Right cardiac atrium (tissue), 5 donors: ENCODE measurements at regions of chr1 and their contacts with region 1.

Region 1: DNA sequence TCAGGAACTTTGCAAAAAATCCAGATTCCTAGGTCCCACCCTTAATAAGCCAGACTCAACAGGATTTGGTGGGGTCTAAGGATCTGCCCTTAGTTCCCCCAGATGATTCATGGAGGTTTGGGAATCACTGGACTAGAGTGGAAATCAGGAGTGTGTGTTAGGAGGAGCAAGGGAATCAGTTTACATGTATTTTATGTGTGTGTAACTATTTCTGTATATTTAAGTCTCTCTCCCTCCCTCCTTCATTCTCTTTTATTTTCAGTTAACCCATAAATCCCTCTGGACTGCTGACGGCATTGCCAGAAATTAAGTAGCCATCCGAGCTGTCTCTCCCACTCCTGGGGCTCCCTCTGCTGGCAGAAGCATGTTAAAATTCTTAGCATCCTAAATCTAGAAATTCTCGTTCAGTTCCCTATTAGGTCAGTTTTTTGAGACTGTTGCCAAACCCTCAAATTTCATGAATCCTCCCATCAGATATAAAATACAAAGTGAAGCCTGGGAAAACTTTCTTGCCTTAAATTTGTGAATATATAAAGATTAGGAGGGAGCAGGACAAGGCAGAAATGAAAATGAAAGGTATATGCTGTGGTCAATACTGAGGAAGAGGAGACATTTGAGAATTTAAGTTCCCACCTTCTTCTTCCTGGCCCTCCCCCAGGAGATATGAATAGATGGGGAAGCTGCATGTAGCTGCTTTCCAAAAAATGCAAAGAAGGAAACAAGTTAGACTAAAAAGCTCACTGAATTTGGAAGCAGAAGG is 11.7 kb upstream of the HSD11B1 start:
- DNase-seq: peak; percentile 82 to 86 (median 85)
- ATAC-seq: peak; percentile 52 to 65
- H3K4me3 ChIP-seq: no peak overlapping the region
- H3K27ac ChIP-seq: no peak overlapping the region
- H3K4me1 ChIP-seq: peaks cover 19% of the 10 kb centered on the region
- H3K27me3 ChIP-seq: no peaks in the 10 kb centered on the region

Region 2: GRCh38 chr1:209527993-209528392 is 164.9 kb before region 1 on chr1:
- intact Hi-C with region 1: no loop called
- DNase-seq: no peak
- ATAC-seq: no peak
- H3K4me3 ChIP-seq: no peak overlapping the region
- H3K27ac ChIP-seq: no peak overlapping the region
- H3K4me1 ChIP-seq: no peaks in the 10 kb centered on the region
- H3K27me3 ChIP-seq: peaks cover 2% of the 10 kb centered on the region

Region 3: DNA sequence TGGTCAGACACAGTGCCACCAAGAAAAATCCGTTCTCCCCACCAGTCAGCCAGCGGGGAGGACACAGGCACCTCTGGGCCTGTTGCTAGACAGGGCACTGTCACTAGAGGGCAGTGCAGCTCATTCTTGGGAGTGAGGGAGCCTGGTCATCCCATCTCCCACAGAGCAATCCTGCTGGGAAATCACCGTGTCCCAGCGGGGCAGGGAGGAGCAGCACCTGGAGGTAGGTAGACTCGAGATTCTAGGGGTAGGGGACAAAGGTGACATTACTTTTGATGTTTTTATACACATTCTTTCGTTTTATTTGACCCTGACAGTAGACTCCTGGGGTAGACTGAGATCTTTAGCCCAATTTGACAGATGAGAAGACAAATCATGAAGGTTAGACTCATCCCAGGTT is 116.1 kb before region 1 on chr1:
- intact Hi-C with region 1: loop called (anchors 5 kb)
- DNase-seq: peak; percentile 80 to 91 (median 89)
- ATAC-seq: peak; percentile 88 to 95
- H3K4me3 ChIP-seq: no peak overlapping the region
- H3K27ac ChIP-seq: no peak overlapping the region
- H3K4me1 ChIP-seq: no peaks in the 10 kb centered on the region
- H3K27me3 ChIP-seq: no peaks in the 10 kb centered on the region

Region 4: DNA sequence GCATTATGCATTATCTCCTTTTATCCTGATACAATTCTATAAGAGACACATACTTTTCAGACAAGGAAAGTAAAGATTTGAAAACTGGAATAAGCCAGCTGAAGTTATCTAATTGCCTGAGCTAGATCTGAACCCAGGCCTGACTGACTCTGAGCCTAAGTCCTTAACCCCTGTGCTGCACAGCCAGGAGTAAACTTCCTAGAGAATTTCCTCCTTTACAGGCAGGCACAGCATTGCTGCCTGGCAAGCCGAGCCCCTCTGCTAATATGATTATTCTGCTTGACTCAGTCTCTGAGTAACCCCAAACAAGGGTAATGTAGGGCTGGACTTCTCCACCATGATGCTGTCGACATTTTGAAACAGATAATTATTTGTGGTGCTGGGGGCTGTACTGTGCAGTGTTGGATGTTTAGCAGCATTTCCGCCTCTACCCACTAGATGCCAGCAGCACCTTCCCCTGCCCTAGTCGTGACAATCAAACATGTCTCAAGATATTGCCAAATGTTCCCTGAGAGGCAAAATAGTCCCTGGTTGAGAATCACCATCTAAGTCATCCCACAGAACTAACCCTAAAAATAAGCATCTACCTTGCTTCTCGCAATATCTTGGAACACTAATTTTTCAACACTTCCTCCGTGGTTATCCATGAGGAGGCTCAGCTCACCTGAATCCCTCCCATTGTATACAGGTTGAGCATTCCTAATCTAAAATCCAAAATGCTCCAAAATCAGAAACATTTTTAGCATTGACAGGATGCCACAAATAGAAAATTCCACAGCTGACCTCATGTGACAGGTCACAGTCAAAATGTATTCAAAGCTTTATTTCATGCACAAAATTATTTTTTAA is 90.9 kb before region 1 on chr1:
- intact Hi-C with region 1: loop called in 2 of 4 experiments (anchors 10 kb)
- DNase-seq: peak in 1 of 3 donors; percentile 64
- ATAC-seq: peak; percentile 86 to 89
- H3K4me3 ChIP-seq: no peak overlapping the region
- H3K27ac ChIP-seq: no peak overlapping the region
- H3K4me1 ChIP-seq: no peaks in the 10 kb centered on the region
- H3K27me3 ChIP-seq: no peaks in the 10 kb centered on the region

Region 5: DNA sequence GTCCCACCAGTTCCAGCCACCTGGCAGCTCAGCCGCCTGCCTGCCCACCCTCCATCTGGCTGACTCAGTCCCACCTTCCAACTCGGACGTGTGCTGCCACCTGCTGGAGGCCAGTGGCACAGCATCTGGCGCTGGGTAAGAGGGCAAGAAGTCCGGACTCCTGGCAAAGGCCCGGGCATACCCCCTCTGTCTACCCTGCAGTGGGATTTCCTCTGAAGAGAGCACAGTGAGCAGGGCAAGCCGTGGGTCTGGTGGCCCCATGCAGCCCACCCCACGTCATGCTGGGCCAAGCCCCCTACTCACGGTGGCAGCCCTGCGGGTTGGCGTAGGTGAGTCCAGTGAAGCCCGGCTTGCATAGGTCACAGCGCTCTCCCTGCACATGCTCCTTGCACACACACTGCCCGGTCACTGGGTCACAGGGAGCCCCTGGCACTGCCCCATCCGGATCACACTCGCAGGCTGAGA is 65.2 kb before region 1 on chr1:
- intact Hi-C with region 1: loop called in 2 of 4 experiments (anchors 2 to 10 kb)
- DNase-seq: peak; percentile 72 to 93 (median 92)
- ATAC-seq: peak; percentile 58 to 67
- H3K4me3 ChIP-seq: no peak overlapping the region
- H3K27ac ChIP-seq: no peak overlapping the region
- H3K4me1 ChIP-seq: peaks cover 4% of the 10 kb centered on the region
- H3K27me3 ChIP-seq: no peaks in the 10 kb centered on the region

Region 6: GRCh38 chr1:209643285-209644020 is 49.5 kb before region 1 on chr1:
- intact Hi-C with region 1: loop called in 1 of 4 experiments (anchors 5 kb)
- DNase-seq: peak; percentile 79 to 94 (median 90)
- ATAC-seq: peak; percentile 71 to 80
- H3K4me3 ChIP-seq: no peak overlapping the region
- H3K27ac ChIP-seq: peak overlapping the region; percentile 81
- H3K4me1 ChIP-seq: peaks cover 37% of the 10 kb centered on the region
- H3K27me3 ChIP-seq: no peaks in the 10 kb centered on the region

Region 7: GRCh38 chr1:209747580-209748262 is 54.8 kb after region 1 on chr1:
- intact Hi-C with region 1: loop called in 2 of 4 experiments (anchors 5 to 10 kb)
- DNase-seq: peak; percentile 91 to 95 (median 95)
- ATAC-seq: peak; percentile 97 to 99
- H3K4me3 ChIP-seq: no peak overlapping the region
- H3K27ac ChIP-seq: peak overlapping the region; percentile 38
- H3K4me1 ChIP-seq: peaks cover 7% of the 10 kb centered on the region
- H3K27me3 ChIP-seq: no peaks in the 10 kb centered on the region

Region 8: DNA sequence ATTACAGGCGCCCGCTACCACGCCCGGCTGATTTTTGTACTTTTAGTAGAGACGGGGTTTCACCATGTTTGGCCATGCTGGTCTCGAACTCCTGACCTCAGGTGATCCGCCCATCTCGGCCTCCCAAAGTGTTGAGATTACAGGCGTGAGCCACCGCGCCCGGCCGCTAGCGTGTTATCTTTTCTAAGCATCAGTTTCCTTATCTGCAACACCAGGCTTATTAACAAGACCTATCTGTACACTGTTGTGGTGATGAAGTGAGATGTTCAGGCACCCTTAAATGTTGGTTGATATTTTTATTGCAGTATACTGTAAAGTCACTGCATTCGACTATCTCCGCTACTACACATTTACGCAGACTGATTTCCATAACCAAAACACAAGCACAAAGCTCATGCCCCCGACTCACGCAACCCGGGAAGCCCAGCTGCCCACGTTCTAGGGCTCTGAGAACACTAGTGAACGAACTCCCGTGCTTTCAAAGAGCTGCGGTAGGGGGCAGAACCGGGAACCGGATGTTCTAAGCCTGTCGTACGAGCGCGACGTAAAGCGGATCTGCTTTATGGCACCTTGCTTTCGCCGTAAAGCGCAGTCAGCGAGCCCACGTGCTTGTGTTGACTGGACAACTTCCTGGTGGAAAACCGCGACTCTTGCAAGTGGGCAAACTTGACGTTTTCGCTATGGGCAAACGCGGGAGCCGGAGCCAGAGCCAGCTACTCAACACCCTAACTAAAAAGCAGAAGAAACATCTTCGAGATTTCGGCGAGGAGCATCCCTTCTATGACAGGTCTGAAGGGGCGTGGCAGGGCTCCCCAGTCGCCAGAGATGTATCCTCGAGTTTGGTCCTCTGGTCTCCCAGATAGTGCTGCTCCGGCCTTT is 134.7 kb after region 1 on chr1 and contains the start of gene UTP25:
- intact Hi-C with region 1: no loop called
- DNase-seq: peak; percentile 93 to 97 (median 97)
- ATAC-seq: peak; percentile 95
- H3K4me3 ChIP-seq: peak within 1 kb of the TSS; percentile 97
- H3K27ac ChIP-seq: peak within 1 kb of the TSS; percentile 21
- H3K4me1 ChIP-seq: peaks cover 2% of the 10 kb centered on the region
- H3K27me3 ChIP-seq: no peaks in the 10 kb centered on the region
- total RNA-seq, gene UTP25: 2.3 to 3.1 (median 3.0) TPM